Activated naive CD8-positive, alpha-beta T cell treated with anti-CD3 and anti-CD28 coated beads, Interleukin-2, amount 10 ng/mL, durations not matched to agents 7 days and 5 days (primary cell): ENCODE measurements at regions of chr12 and their contacts with region 1.

Region 1: GRCh38 chr12:14769969-14770495 is 33.2 kb downstream of the WBP11 start:
- DNase-seq: peak; percentile 89
- ATAC-seq: peak; percentile 43
- H3K4me3 Mint-ChIP-seq: peak overlapping the region; percentile 94
- H3K27ac Mint-ChIP-seq: peak overlapping the region; percentile 99
- H3K4me1 Mint-ChIP-seq: peaks cover 34% of the 10 kb centered on the region
- H3K27me3 Mint-ChIP-seq: no peaks in the 10 kb centered on the region

Region 2: DNA sequence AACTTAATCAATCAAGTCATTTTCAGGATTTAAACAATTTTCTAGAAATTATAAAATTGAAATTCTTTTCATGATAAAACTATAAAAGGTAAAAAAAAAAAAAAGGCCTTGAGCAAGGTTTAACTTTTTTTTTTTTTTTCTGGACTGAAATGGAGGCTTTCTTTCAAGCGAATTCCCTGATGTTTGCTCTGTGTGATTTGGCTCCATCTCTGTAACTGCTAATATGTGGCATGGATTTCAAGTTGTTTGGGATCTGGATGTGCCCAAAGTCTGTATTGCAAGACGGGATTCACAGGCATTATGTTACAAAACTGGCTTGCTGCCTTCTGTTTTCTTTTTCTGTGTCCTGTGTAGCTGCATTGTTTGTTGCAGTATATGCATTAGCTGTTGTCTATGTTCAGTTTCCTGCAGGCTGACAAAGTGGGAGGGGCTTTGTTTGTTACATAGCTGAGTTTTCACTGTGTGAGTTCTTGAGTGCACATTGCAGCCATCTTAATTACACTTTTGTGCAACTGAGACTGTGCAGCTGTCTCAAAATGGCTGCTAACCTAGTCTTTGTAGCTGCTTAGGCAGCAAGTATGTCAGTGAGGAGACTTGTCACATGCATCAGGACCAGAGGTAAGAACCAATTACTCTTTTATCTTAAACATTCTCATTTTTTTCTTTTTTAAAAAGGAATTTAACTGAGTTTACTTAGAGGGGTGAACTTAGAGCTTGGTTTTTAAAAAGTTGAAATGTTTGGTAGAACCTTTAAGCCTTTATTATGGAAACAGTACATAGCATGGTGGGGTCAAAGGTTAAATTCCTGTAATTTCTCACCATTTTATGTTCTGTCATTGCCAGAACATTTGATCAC is 385.0 kb before region 1 on chr12:
- POLR2A ChIA-PET with region 1: interaction called, 24 read pairs
- DNase-seq: no peak
- ATAC-seq: peak; percentile 96
- H3K4me3 Mint-ChIP-seq: peak overlapping the region; percentile 85
- H3K27ac Mint-ChIP-seq: peak overlapping the region; percentile 94
- H3K4me1 Mint-ChIP-seq: peaks cover 44% of the 10 kb centered on the region
- H3K27me3 Mint-ChIP-seq: no peaks in the 10 kb centered on the region

Region 3: GRCh38 chr12:14803011-14803829 is 33.2 kb after region 1 on chr12 and contains the starts of genes C12orf60 and WBP11:
- POLR2A ChIA-PET with region 1: interaction called, 75 read pairs
- DNase-seq: peak; percentile 80
- ATAC-seq: peak; percentile 99
- H3K4me3 Mint-ChIP-seq: no peak within 1 kb of the TSS
- H3K27ac Mint-ChIP-seq: no peak within 1 kb of the TSS
- H3K4me1 Mint-ChIP-seq: peaks cover 29% of the 10 kb centered on the region
- H3K27me3 Mint-ChIP-seq: no peaks in the 10 kb centered on the region
- total RNA-seq, gene C12orf60: 1.3 to 1.6 TPM
- total RNA-seq, gene WBP11: 90.9 to 98.0 TPM

Region 4: DNA sequence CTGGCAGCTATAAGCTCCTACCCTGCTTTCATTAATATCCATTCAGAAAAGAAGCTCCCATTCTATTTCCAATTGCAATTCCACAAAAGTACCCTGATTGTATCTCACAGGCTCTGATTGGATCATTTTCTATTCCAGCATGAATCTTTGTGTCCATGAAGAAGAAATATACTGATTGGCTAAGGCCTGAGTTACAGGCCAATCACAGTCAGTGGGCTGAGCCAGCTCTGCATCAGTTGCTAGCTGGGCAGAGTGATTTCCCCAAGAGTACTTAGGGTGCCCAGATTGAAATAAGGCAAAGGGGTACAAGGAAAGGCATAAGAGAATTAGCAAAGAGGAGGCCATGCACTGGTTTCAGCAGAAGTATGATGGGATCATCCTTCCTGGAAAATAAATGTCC is 58.9 kb after region 1 on chr12:
- POLR2A ChIA-PET with region 1: no interaction called
- DNase-seq: no peak
- ATAC-seq: no peak
- H3K4me3 Mint-ChIP-seq: no peak overlapping the region
- H3K27ac Mint-ChIP-seq: no peak overlapping the region
- H3K4me1 Mint-ChIP-seq: no peaks in the 10 kb centered on the region
- H3K27me3 Mint-ChIP-seq: peaks cover 8% of the 10 kb centered on the region

Region 5: DNA sequence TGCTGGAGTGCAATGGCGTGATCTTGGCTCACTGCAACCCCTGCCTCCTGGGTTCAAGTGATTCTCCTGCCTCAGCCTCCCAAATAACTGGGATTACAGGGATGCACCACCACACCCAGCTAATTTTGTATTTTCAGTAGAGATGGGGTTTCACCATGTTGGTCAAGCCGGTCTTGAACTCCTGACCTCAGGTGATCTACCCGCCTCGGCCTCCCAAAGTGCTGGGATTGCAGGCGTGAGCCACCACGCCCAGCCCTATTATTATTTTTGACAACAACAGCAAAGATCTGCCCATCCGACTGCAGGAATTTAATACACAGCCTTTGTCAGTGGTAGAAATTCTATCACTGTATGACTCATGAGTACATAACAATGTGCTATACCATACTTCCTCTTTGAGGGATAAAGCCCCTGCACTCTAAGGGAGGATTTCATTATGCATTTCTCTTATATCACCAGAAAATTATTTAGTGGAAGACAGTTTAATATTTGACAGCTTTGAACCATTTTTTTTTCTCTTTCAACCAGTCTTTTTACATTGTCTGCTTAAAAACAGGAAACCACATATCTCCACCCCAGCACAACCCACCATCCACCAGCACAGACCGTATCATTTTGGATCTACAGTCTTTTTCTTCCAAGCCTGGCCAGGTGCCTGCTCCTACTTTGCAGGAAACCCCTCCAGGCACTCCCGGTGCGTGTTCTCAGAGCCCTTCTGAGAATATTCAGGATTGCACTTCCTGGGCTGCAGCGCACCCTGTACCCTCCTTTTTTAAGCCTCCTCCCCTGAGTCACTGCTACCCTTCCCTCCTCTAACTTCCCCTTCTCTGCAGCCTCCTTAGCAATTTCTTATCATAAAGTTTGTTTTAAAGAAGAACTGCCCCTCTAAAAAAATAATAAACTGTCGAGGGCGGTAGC is 190.8 kb after region 1 on chr12:
- POLR2A ChIA-PET with region 1: interaction called, 186 read pairs
- DNase-seq: peak; percentile 63
- ATAC-seq: peak; percentile 37
- H3K4me3 Mint-ChIP-seq: peak overlapping the region; percentile 98
- H3K27ac Mint-ChIP-seq: peak overlapping the region; percentile 99
- H3K4me1 Mint-ChIP-seq: peaks cover 46% of the 10 kb centered on the region
- H3K27me3 Mint-ChIP-seq: no peaks in the 10 kb centered on the region

Region 6: DNA sequence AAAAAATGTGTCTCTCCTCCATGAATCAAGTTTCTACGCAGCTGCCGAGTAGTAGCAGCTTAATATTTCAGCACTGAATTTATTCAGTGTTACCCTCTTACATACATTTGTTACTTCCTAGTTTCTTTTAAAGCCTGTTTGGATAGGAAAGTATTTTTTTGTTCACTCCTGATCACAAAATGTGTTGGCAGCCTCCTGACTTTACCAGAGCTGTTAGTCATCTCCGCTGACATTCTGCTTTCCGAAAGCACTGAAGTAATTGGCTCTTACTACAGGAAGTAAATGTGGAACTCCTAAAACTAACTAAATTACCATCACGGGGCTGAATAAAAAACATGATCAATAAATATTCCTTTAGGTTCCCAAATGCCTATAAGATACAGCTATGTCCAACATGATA is 793.6 kb after region 1 on chr12:
- POLR2A ChIA-PET with region 1: interaction called, 14 read pairs
- DNase-seq: no peak
- ATAC-seq: peak; percentile 54
- H3K4me3 Mint-ChIP-seq: peak overlapping the region; percentile 74
- H3K27ac Mint-ChIP-seq: peak overlapping the region; percentile 92
- H3K4me1 Mint-ChIP-seq: peaks cover 47% of the 10 kb centered on the region
- H3K27me3 Mint-ChIP-seq: peaks cover 4% of the 10 kb centered on the region